Naive thymus-derived CD8-positive, alpha-beta T cell (primary cell): ENCODE measurements at regions of chr6 and their contacts with region 1.

Region 1: DNA sequence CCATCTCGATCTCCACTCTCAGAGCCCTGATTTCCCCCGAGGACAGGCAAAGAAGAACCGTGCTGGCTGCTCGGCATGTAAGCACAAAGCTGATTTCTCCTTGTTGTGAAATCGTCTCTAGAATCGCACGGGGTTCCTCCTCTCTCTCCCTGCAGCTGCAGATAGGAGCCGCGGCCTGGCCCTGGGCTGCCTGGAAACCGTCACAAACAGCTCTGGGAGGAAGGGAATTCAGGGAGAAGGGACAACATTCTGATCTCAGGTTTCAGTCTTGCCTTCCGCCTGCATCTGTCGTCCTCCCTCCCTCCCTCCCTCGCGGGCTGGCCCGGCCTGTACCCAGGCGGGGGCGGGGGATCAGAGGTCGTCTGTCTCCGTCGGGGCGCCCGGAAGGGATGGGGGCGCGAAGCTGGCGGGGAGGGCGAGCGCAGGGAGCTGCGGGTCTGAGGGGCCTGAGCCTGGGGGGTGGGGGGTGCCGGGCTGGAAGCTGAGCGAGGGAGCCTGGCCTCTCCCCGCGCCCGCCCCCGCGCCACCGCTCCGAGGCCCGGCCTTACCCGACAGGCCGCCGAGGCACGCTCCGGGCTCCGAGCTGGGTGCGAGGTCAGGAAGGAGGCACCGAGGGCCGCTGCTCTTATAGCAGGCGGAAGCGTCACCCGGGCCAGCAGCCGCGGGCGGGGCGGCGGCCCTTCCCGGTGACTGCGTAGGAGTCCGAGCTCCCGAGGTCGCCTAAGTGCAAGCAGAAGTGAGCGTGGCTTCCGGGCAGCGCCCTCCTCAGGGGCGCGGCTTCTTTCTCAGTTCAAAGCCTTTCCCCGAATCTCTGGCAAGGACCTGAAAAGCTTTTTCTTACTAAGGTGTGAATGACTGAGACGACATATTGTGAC is at the start of gene SERPINB1:
- DNase-seq: peak; percentile 56 to 82 (median 66)
- ATAC-seq: peak; percentile 78
- H3K4me3 Mint-ChIP-seq: peak within 1 kb of the TSS; percentile 86 to 95 (median 90)
- H3K27ac Mint-ChIP-seq: peak within 1 kb of the TSS; percentile 86 to 97 (median 94)
- H3K4me1 Mint-ChIP-seq: peaks cover 22 to 71% (median 50%) of the 10 kb centered on the region in 4 donors
- H3K27me3 Mint-ChIP-seq: no peaks in the 10 kb centered on the region
- polyA plus RNA-seq, gene SERPINB1: 121 to 130 (median 123) TPM

Region 2: DNA sequence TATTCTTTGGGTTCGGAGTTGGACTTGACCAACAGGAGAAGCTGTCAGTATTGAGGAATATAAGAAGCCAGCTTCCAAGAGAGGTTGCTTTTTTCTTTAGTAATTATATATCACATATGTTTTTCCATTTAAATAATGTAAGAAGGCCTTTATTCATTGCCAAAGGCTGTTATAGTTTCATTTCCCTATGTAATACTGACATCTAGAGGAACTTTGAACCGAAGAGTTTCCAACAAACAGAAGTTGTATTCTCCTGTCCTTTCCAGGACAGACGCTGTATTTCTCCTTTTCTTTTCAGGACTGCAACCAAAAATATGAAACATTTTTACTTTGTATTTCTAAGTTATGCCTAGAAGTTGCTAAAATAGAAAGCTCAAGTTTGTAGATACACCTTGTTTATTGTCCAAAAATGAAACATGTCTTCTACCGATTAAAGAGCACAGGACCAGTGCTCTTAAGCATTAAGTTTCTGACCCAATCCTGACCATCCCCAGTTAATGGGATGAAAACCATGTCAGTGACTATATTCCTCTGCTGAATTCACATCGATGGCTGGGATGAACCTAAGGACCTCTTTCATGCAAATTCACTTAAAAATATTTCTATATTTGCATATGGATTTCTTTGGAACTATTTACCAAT is 145.9 kb before region 1 on chr6:
- POLR2A ChIA-PET with region 1: no interaction called
- DNase-seq: no peak
- ATAC-seq: no peak
- H3K4me3 Mint-ChIP-seq: no peak overlapping the region
- H3K27ac Mint-ChIP-seq: no peak overlapping the region
- H3K4me1 Mint-ChIP-seq: no peaks in the 10 kb centered on the region
- H3K27me3 Mint-ChIP-seq: peaks cover 0 to 6% (median 4%) of the 10 kb centered on the region in 5 donors

Region 3: GRCh38 chr6:2765166-2765895 is 76.2 kb before region 1 on chr6 and contains the start of gene WRNIP1:
- POLR2A ChIA-PET with region 1: interaction called, 35 read pairs
- DNase-seq: peak; percentile 90 to 99 (median 97)
- ATAC-seq: peak; percentile 83 to 86
- H3K4me3 Mint-ChIP-seq: peak within 1 kb of the TSS; percentile 88 to 97 (median 95)
- H3K27ac Mint-ChIP-seq: peak within 1 kb of the TSS; percentile 94 to 100 (median 98)
- H3K4me1 Mint-ChIP-seq: peaks cover 19 to 56% (median 52%) of the 10 kb centered on the region in 4 donors
- H3K27me3 Mint-ChIP-seq: no peaks in the 10 kb centered on the region
- polyA plus RNA-seq, gene WRNIP1: 33.1 to 61.0 (median 36.3) TPM

Region 4: DNA sequence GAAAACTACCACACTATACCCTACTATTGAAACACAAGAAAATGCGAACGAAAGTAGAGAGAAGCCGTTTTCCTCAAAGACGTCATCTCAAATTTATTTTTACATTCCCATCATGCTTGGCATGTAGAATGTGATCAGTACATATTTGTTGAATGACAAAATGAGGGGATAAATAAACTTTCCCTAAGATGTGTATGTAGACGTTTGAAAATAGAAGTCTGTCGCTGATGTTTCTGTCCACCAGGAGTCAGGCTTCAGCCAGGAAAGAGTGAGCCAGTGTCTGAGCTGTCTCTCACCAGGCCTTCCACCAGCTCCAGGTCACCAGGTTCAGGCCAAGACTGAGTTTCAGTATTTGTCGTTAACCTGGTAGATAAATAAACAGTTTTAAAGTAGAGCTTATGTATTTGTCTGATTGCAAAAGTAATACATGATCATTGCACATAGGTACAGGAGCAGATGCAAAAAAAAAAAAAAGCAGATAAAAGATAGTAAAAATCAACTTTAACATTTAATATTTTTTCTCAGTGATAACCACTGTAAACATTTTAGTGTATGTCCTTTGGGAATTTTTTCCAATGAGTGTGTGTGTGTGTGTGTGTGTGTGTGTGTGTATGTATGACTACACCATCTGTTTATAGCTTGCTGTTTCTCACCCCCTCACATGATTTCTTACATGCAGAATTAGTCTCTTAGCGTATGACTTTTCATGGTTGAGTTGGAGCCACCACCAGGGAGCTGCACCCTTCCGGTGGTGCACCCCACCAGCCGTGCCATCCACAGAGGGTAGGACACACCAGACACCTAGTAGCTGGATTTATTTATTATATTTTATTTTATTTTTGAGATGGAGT is 50.2 kb before region 1 on chr6:
- POLR2A ChIA-PET with region 1: interaction called, 14 read pairs
- DNase-seq: peak in 9 of 10 donors; percentile 24 to 73 (median 43)
- ATAC-seq: peak; percentile 73
- H3K4me3 Mint-ChIP-seq: peak overlapping the region in 9 of 10 donors; percentile 18 to 72 (median 55)
- H3K27ac Mint-ChIP-seq: peak overlapping the region in 9 of 10 donors; percentile 57 to 86 (median 74)
- H3K4me1 Mint-ChIP-seq: peaks cover 21 to 49% (median 38%) of the 10 kb centered on the region in 4 donors
- H3K27me3 Mint-ChIP-seq: no peaks in the 10 kb centered on the region

Region 5: GRCh38 chr6:2853761-2854395 is 12.4 kb after region 1 on chr6:
- POLR2A ChIA-PET with region 1: interaction called, 27 read pairs
- DNase-seq: peak in 7 of 10 donors; percentile 34 to 50 (median 39)
- ATAC-seq: peak; percentile 6 to 13
- H3K4me3 Mint-ChIP-seq: peak overlapping the region; percentile 55 to 86 (median 77)
- H3K27ac Mint-ChIP-seq: peak overlapping the region; percentile 85 to 100 (median 94)
- H3K4me1 Mint-ChIP-seq: peaks cover 37 to 74% (median 69%) of the 10 kb centered on the region in 4 donors
- H3K27me3 Mint-ChIP-seq: peaks cover 0 to 2% (median 0%) of the 10 kb centered on the region in 5 donors

Region 6: GRCh38 chr6:2876210-2877056 is 34.9 kb after region 1 on chr6:
- POLR2A ChIA-PET with region 1: interaction called, 13 read pairs
- DNase-seq: no peak
- ATAC-seq: peak; percentile 15 to 24
- H3K4me3 Mint-ChIP-seq: peak overlapping the region; percentile 72 to 94 (median 89)
- H3K27ac Mint-ChIP-seq: peak overlapping the region; percentile 91 to 99 (median 96)
- H3K4me1 Mint-ChIP-seq: peaks cover 44 to 88% (median 81%) of the 10 kb centered on the region in 4 donors
- H3K27me3 Mint-ChIP-seq: no peaks in the 10 kb centered on the region

Region 7: GRCh38 chr6:2900821-2901644 is 59.5 kb after region 1 on chr6:
- POLR2A ChIA-PET with region 1: interaction called, 39 read pairs
- DNase-seq: peak in 1 of 10 donors; percentile 12
- ATAC-seq: no peak
- H3K4me3 Mint-ChIP-seq: peak overlapping the region; percentile 97 to 100 (median 100)
- H3K27ac Mint-ChIP-seq: peak overlapping the region; percentile 91 to 98 (median 98)
- H3K4me1 Mint-ChIP-seq: peaks cover 40 to 71% (median 62%) of the 10 kb centered on the region in 4 donors
- H3K27me3 Mint-ChIP-seq: no peaks in the 10 kb centered on the region

Region 8: DNA sequence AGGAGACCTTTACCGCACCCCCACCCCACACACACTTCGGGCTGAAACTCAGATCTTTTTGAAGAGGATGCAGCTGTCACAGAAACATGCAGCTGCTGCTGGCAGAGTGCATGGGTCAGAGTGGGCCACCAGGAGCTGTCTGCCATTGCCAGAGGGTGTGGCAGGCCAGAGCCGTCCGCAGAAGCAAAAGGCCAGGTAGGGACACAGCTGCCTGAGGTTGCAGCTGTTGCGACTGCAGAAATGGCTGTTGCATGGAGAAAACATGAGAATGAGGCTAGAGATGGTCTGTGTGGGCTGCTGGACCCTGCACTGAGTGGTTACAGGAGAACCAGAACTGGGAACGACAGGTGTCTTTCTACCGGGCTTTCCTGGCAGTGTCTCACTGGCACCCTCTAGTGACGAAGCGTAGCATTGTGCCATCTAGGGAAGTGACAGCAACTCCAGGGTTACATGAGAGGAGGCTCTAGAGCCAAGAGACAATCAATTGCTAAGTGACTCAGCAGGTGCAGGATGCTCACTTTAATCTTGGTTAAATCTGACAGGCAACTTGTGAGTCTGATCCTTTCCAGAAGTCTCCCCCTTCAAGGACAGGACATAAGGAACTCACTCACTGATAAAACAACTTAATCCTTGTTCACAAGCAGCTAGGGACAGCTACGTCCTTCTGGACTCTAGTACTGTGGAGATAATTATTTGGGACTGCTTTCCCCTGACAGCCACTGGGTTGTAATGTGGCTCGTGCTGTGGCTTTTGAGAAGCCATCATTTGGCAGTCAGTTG is 90.7 kb after region 1 on chr6:
- POLR2A ChIA-PET with region 1: interaction called, 36 read pairs
- DNase-seq: peak; percentile 61 to 91 (median 84)
- ATAC-seq: peak; percentile 77
- H3K4me3 Mint-ChIP-seq: peak overlapping the region; percentile 40 to 68 (median 51)
- H3K27ac Mint-ChIP-seq: peak overlapping the region in 9 of 10 donors; percentile 1 to 78 (median 56)
- H3K4me1 Mint-ChIP-seq: peaks cover 16 to 32% (median 24%) of the 10 kb centered on the region in 4 donors
- H3K27me3 Mint-ChIP-seq: no peaks in the 10 kb centered on the region